HepG2 (cell line): ENCODE measurements at regions of chr7 and their contacts with region 1.

Region 1: GRCh38 chr7:85030893-85031292 is 156.0 kb downstream of the SEMA3D start:
- DNase-seq: peak; percentile 5
- ATAC-seq: 0 out of 3 replicates have a peak, but pooled peaks have one; percentile 35
- H3K4me3 ChIP-seq: no peak overlapping the region
- H3K27ac ChIP-seq: no peak overlapping the region
- H3K4me1 ChIP-seq: no peaks in the 10 kb centered on the region
- H3K27me3 ChIP-seq: no peaks in the 10 kb centered on the region; a peak in 1 of 5 replicates
- CTCF ChIP-seq: peak; percentile 45
- EP300 ChIP-seq: no peak
- POLR2A ChIP-seq: no peak
- RAD21 ChIP-seq: no peak

Region 2: GRCh38 chr7:84879570-84880325 is 151.1 kb before region 1 on chr7:
- CTCF ChIA-PET with region 1: no interaction called
- POLR2A ChIA-PET with region 1: no interaction called
- in situ Hi-C with region 1: no loop called
- intact Hi-C with region 1: no loop called
- DNase-seq: no peak
- ATAC-seq: no peak
- H3K4me3 ChIP-seq: no peak overlapping the region
- H3K27ac ChIP-seq: no peak overlapping the region
- H3K4me1 ChIP-seq: no peaks in the 10 kb centered on the region
- H3K27me3 ChIP-seq: no peaks in the 10 kb centered on the region
- CTCF ChIP-seq: no peak
- EP300 ChIP-seq: no peak
- POLR2A ChIP-seq: no peak
- RAD21 ChIP-seq: no peak

Region 3: DNA sequence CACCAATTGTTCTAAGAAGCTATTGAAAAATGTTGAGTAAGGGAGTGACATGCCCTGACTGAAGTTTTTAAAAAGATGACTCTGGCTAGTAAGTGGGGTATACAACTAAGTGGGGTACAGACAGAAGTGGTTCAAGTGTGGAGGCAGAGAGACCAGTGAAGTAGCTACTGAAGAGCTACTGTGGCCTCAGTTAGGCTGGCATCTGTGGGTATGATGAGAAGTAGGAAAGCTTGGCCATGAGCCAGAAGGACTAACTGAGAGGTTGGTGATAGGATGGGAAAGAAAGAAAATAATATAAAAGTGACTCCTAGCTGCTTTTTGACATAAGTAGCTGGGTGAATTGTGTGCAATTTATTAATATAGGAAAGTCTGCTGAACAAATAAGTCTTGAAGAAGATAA is 20.6 kb before region 1 on chr7:
- CTCF ChIA-PET with region 1: no interaction called
- POLR2A ChIA-PET with region 1: no interaction called
- in situ Hi-C with region 1: no loop called
- intact Hi-C with region 1: no loop called
- DNase-seq: no peak
- ATAC-seq: no peak
- H3K4me3 ChIP-seq: no peak overlapping the region
- H3K27ac ChIP-seq: no peak overlapping the region
- H3K4me1 ChIP-seq: no peaks in the 10 kb centered on the region
- H3K27me3 ChIP-seq: no peaks in the 10 kb centered on the region
- CTCF ChIP-seq: no peak
- EP300 ChIP-seq: no peak
- POLR2A ChIP-seq: no peak
- RAD21 ChIP-seq: no peak

Region 4: DNA sequence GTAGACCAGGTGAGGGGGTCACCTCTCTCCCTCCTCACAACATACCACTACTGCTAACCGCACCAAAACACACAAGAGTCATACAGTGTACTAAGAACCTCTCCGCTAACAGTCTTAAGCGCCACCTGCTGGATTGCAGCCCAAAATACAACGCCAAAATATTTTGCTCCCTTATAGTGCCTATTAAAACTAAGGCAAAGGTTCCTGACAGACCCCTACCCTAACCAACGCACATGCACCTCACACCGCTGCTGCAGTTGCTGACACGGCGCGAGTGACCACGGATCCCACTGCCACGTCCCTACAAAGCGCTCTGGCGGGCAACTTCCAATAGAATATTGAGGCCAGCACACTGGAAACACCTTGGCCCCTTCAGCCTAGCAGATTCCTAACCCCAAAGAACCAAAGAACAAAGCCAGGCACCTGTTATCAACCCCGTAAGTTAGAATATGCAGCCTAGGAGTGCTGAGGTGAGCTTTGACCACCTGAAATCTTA is 719.6 kb after region 1 on chr7:
- CTCF ChIA-PET with region 1: interaction called, 3 read pairs
- POLR2A ChIA-PET with region 1: no interaction called
- in situ Hi-C with region 1: loop called (anchors 10 kb)
- intact Hi-C with region 1: loop called (anchors 2 kb)
- DNase-seq: peak; percentile 36
- ATAC-seq: peak; percentile 97
- H3K4me3 ChIP-seq: no peak overlapping the region
- H3K27ac ChIP-seq: no peak overlapping the region
- H3K4me1 ChIP-seq: no peaks in the 10 kb centered on the region
- H3K27me3 ChIP-seq: no peaks in the 10 kb centered on the region
- CTCF ChIP-seq: peak; percentile 77
- EP300 ChIP-seq: no peak
- POLR2A ChIP-seq: no peak
- RAD21 ChIP-seq: peak; percentile 35; the same call in 1 of the 2 replicates

Region 5: DNA sequence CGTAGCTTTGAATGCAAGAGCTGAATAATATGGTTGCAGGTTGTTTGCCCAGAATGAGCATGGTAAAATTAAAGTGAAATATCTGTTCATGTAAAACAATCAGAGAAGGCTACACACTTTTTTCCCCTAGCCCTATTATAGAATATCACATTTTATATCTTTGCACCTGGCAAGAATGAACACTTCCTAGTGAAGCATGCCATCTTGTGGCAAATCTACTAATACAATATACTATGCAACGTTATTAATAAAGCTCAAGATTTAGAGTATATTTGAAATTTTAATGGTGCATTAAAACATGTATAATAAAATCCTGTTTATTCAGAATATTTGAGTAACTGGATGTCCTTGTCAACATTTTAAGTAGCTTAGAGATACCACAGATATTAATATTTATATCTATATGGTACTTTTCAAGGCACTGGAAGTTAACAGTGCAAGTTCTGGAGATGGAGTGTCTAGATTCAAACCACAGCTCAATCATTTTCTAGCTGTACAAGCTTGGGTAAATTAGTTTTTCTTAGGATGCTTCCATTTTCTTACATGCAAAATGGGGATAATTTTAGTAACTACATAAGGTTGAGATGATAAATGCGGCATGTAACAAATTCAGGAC is 799.0 kb after region 1 on chr7:
- CTCF ChIA-PET with region 1: no interaction called
- POLR2A ChIA-PET with region 1: no interaction called
- in situ Hi-C with region 1: no loop called
- intact Hi-C with region 1: loop called (anchors 5 kb)
- DNase-seq: no peak
- ATAC-seq: no peak
- H3K4me3 ChIP-seq: no peak overlapping the region
- H3K27ac ChIP-seq: no peak overlapping the region
- H3K4me1 ChIP-seq: no peaks in the 10 kb centered on the region
- H3K27me3 ChIP-seq: no peaks in the 10 kb centered on the region
- CTCF ChIP-seq: peak; percentile 16; the same call in 1 of the 2 replicates
- EP300 ChIP-seq: no peak
- POLR2A ChIP-seq: no peak
- RAD21 ChIP-seq: no peak

Region 6: GRCh38 chr7:85851571-85852193 is 820.8 kb after region 1 on chr7:
- CTCF ChIA-PET with region 1: no interaction called
- POLR2A ChIA-PET with region 1: no interaction called
- in situ Hi-C with region 1: loop called (anchors 10 kb)
- intact Hi-C with region 1: loop called (anchors 2 kb)
- DNase-seq: peak; percentile 16
- ATAC-seq: no peak
- H3K4me3 ChIP-seq: no peak overlapping the region
- H3K27ac ChIP-seq: no peak overlapping the region
- H3K4me1 ChIP-seq: no peaks in the 10 kb centered on the region
- H3K27me3 ChIP-seq: no peaks in the 10 kb centered on the region
- CTCF ChIP-seq: peak; percentile 41
- EP300 ChIP-seq: no peak
- POLR2A ChIP-seq: no peak
- RAD21 ChIP-seq: no peak